CD4-positive, alpha-beta memory T cell (primary cell): ENCODE measurements at regions of chr11 and their contacts with region 1.

Region 1: GRCh38 chr11:2305140-2305840 is 3.5 kb downstream of the TSPAN32 start:
- DNase-seq: peak; percentile 71 to 79 (median 74)
- H3K4me3 ChIP-seq: peak overlapping the region; percentile 44 to 48
- H3K4me3 Mint-ChIP-seq: peak overlapping the region; percentile 63 to 91 (median 83)
- H3K27ac ChIP-seq: peak overlapping the region; percentile 52
- H3K27ac Mint-ChIP-seq: peak overlapping the region; percentile 29 to 95 (median 76)
- H3K4me1 ChIP-seq: peaks cover 75% of the 10 kb centered on the region
- H3K4me1 Mint-ChIP-seq: peaks cover 24 to 57% (median 41%) of the 10 kb centered on the region in 4 donors
- H3K27me3 ChIP-seq: no peaks in the 10 kb centered on the region
- H3K27me3 Mint-ChIP-seq: no peaks in the 10 kb centered on the region

Region 2: DNA sequence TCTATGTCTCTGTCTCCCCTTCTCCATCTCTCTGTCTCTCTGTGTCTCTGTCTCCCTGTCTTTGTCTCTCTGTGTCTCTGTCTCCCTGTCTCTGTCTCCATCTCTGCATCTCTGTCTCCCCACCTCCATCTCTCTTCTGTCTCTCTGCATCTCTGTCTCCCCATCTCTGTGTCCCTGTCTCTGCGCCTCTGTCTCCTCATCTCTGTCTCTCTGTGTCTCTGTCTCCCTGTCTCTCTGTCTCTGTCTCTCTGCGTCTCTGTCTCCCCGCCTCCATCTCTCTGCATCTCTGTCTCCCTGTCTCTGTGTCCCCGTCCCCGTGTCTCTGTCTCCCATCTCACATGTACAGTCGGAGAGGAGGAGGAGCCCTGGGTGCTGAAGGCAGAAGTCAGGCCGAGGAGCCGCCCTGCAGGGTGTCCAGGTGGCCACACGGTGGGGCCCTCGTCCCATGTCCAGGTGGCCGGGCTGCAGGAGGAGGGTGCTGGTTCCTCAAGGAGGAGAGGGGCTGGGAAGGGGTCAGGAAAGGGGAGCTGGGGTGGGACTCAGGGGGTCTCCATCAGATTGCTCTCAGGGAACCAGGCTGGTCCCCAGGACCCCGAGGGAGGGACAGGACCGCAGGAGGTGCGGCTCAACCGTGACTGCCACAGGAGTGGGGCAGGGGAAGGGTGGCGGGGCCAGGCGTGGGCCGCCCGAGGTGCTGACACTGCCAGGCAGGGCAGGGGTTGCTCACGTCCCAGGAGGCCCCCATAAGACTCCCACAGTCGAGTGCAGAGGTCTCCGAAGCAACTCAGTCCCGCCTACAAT is 108.1 kb before region 1 on chr11:
- CTCF ChIA-PET with region 1: interaction called, 14 read pairs
- POLR2A ChIA-PET with region 1: no interaction called
- intact Hi-C with region 1: loop called (anchors 2 kb)
- DNase-seq: peak; percentile 55 to 69 (median 65)
- H3K4me3 ChIP-seq: no peak overlapping the region
- H3K4me3 Mint-ChIP-seq: no peak overlapping the region
- H3K27ac ChIP-seq: no peak overlapping the region
- H3K27ac Mint-ChIP-seq: peak overlapping the region in 3 of 7 donors; percentile 45 to 75 (median 63)
- H3K4me1 ChIP-seq: no peaks in the 10 kb centered on the region
- H3K4me1 Mint-ChIP-seq: peaks cover 0 to 11% (median 5%) of the 10 kb centered on the region in 4 donors
- H3K27me3 ChIP-seq: no peaks in the 10 kb centered on the region
- H3K27me3 Mint-ChIP-seq: peaks cover 1 to 5% of the 10 kb centered on the region in 2 donors

Region 3: GRCh38 chr11:2320568-2321310 is 15.4 kb after region 1 on chr11:
- CTCF ChIA-PET with region 1: interaction called, 19 read pairs
- POLR2A ChIA-PET with region 1: interaction called, 20 read pairs
- intact Hi-C with region 1: no loop called
- DNase-seq: peak in 1 of 5 donors; percentile 7
- H3K4me3 ChIP-seq: no peak overlapping the region
- H3K4me3 Mint-ChIP-seq: no peak overlapping the region
- H3K27ac ChIP-seq: no peak overlapping the region
- H3K27ac Mint-ChIP-seq: no peak overlapping the region
- H3K4me1 ChIP-seq: no peaks in the 10 kb centered on the region
- H3K4me1 Mint-ChIP-seq: no peaks in the 10 kb centered on the region
- H3K27me3 ChIP-seq: no peaks in the 10 kb centered on the region
- H3K27me3 Mint-ChIP-seq: peaks cover 5 to 9% of the 10 kb centered on the region in 2 donors

Region 4: GRCh38 chr11:2358754-2359442 is 53.6 kb after region 1 on chr11:
- CTCF ChIA-PET with region 1: no interaction called
- POLR2A ChIA-PET with region 1: no interaction called
- intact Hi-C with region 1: no loop called
- DNase-seq: no peak
- H3K4me3 ChIP-seq: no peak overlapping the region
- H3K4me3 Mint-ChIP-seq: no peak overlapping the region
- H3K27ac ChIP-seq: no peak overlapping the region
- H3K27ac Mint-ChIP-seq: peak overlapping the region in 1 of 7 donors; percentile 62
- H3K4me1 ChIP-seq: no peaks in the 10 kb centered on the region
- H3K4me1 Mint-ChIP-seq: no peaks in the 10 kb centered on the region
- H3K27me3 ChIP-seq: no peaks in the 10 kb centered on the region
- H3K27me3 Mint-ChIP-seq: no peaks in the 10 kb centered on the region

Region 5: DNA sequence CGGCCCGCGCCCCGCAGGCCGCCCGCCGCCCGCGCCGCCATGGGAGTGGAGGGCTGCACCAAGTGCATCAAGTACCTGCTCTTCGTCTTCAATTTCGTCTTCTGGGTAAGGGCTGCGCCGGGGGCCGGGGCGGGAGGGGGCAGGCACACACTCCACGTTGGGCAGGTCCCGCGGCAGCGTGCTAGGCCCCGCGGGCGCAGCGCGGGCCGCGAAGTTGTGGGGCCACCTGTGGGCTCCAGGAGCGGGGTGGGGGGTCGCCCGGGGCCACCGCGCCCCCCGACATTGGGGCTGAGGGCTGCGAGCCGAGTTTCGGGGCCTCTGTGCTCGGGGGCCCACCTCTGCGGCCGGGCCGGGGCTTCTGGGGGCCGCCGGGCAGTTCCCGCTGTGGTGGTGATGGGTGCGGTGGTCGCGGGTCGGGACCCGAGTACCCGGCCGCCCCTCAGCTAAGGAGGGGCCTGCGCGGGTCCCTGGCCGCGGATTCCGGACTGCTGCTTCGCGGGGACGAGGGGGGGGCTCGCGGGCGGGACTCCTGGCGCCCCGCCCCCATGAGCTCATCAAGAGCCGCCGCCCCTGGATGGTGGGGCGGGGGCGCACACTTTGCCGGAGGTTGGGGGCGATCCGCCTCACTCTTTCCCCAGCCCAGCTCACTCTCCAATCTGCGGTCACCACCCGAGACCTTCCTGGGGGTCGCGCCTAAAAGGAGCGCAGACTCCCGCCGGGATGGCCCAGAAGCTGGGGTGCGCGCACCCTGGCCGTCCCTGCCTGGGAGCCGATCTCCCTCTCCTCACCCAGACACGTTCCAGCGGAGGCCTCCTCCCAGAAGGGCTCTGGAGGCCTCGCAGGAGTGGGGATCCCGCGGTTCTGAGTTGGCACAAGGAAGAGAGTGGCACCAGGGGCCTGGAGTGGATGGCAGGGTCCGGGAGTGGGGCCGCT is 72.5 kb after region 1 on chr11:
- CTCF ChIA-PET with region 1: interaction called, 7 read pairs
- POLR2A ChIA-PET with region 1: interaction called, 22 read pairs
- intact Hi-C with region 1: loop called (anchors 5 kb)
- DNase-seq: peak in 4 of 5 donors; percentile 45 to 66 (median 58)
- H3K4me3 ChIP-seq: peak overlapping the region; percentile 29 to 76
- H3K4me3 Mint-ChIP-seq: peak overlapping the region; percentile 80 to 88 (median 82)
- H3K27ac ChIP-seq: peak overlapping the region; percentile 77
- H3K27ac Mint-ChIP-seq: peak overlapping the region; percentile 66 to 90 (median 77)
- H3K4me1 ChIP-seq: peaks cover 39% of the 10 kb centered on the region
- H3K4me1 Mint-ChIP-seq: peaks cover 11 to 41% (median 26%) of the 10 kb centered on the region in 4 donors
- H3K27me3 ChIP-seq: no peaks in the 10 kb centered on the region
- H3K27me3 Mint-ChIP-seq: no peaks in the 10 kb centered on the region

Region 6: GRCh38 chr11:2390725-2391151 is 85.4 kb after region 1 on chr11:
- CTCF ChIA-PET with region 1: interaction called, 17 read pairs
- POLR2A ChIA-PET with region 1: interaction called, 16 read pairs
- intact Hi-C with region 1: no loop called
- DNase-seq: no peak
- H3K4me3 ChIP-seq: no peak overlapping the region
- H3K4me3 Mint-ChIP-seq: no peak overlapping the region
- H3K27ac ChIP-seq: no peak overlapping the region
- H3K27ac Mint-ChIP-seq: peak overlapping the region in 4 of 7 donors; percentile 64 to 86 (median 72)
- H3K4me1 ChIP-seq: peaks cover 44% of the 10 kb centered on the region
- H3K4me1 Mint-ChIP-seq: peaks cover 15 to 43% (median 29%) of the 10 kb centered on the region in 4 donors
- H3K27me3 ChIP-seq: no peaks in the 10 kb centered on the region
- H3K27me3 Mint-ChIP-seq: no peaks in the 10 kb centered on the region

Region 7: DNA sequence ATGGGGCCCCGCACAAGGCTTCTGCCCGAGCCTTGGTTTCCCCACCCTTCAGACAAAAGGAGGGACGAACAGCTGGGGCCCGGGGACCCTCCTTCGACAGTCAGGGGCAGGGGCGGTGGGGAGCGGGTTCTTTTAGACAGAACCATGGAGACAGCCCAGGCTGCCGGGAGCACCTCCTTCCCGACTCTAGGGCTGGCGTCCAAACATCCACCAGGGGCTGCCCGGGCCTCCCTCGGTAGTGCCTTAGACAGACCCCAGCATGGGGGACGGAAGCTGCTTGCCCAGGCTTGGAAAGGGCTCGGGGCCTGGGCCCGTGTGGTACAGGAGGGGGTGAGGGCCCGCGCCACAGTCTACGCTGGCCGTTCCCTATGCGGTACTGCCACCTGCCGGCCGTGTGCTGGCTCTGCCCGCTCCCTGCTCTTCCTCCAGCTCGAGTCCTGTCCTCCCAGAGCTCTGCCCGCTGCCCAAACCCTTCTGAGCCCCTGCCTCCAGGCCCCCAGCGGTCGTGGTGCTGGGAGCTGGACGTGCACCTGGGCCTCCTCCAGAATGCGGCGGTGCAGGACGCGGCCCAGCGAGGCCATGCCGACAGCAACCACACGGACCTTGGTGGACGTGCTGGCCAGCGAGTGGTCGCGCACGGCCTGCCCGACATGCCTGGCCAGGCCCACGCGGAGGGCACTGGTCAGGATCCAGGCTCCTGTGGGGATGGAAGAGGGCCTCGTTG is 115.4 kb after region 1 on chr11:
- CTCF ChIA-PET with region 1: interaction called, 262 read pairs
- POLR2A ChIA-PET with region 1: interaction called, 37 read pairs
- intact Hi-C with region 1: no loop called
- DNase-seq: peak; percentile 64 to 73 (median 70)
- H3K4me3 ChIP-seq: no peak overlapping the region
- H3K4me3 Mint-ChIP-seq: peak overlapping the region in 1 of 8 donors; percentile 22
- H3K27ac ChIP-seq: no peak overlapping the region
- H3K27ac Mint-ChIP-seq: no peak overlapping the region
- H3K4me1 ChIP-seq: peaks cover 11% of the 10 kb centered on the region
- H3K4me1 Mint-ChIP-seq: peaks cover 0 to 7% (median 2%) of the 10 kb centered on the region in 4 donors
- H3K27me3 ChIP-seq: no peaks in the 10 kb centered on the region
- H3K27me3 Mint-ChIP-seq: no peaks in the 10 kb centered on the region